AG04450 (cell line): ENCODE measurements at regions of chr19 and their contacts with region 1.

Region 1: DNA sequence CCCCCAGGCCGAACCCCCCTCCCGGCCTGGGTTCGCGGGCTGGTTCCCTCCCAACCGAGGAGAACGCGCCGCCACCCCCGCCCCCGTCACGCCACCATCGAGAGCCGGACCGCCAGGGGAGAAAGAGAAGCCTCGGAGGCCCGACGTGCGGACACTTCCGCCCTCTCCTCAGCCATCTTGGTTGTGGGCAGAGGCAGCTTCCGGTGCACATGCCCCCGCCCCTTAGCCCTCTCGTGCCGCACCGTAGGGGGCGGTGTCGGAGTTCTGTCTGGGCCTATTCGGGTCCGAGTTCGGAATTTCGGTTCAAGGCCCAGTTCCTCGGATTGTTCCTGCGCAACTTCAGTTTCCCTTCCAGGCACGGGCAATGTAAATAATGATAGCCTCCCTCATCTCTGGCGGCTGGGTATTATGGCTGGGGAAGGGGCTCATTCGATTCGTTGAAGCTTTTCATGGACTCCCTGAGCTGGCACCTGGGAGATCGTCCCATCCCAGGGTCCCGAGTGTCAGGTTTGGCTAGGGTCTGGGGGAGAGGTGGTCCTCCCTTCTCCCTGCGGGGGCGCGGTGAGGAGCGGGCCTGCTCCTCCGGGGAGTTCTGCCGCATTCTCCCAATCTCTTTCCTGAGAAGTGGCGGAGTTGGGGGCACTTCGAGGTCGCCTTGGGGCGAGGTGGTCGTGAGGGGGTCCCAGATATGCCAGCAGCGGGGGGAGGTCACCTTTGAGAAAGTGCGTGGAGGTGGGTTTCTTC is at the starts of genes IER2 and STX10:
- DNase-seq: peak; percentile 86
- H3K4me3 ChIP-seq: peak within 1 kb of the TSS; percentile 87
- H3K27ac ChIP-seq: peak within 1 kb of the TSS; percentile 94
- H3K27me3 ChIP-seq: no peaks in the 10 kb centered on the region
- CTCF ChIP-seq: peak; percentile 67
- polyA plus RNA-seq, gene IER2: 15.3 and 21.3 TPM in 2 replicates
- polyA plus RNA-seq, gene STX10: 47.9 and 57.6 TPM in 2 replicates

Region 2: DNA sequence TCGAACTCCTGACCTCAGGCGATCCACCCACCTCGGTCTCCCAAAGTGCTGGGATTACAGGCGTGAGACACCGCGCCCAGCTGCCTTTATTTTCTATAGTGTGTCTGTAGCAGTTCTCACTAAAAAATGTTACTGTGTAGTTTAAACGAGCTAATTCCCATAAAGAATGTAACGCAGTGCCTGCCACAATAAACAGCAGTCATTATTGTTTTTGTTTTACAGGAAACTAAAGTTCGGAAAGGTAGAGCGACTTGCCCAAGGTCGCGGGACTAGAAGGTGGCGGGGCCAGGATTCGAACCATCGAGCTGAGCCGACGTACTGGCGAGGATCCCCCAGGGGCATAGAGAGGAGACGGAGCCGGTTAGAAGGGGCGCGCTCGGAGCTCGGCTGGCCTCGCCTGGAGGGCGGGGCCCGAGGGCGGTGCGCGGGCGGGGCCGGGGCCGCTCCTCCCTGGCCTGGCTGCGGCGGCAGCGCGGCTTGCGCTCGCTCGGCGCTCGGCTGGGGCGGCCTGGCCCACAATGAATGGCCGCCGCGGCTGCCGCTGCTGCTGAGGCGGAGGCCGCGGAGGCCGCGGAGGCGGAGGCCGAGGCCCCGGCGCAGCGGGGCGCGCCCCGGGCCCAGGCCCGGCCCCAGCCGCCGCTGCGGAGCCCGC is 32.5 kb before region 1 on chr19 and contains the start of gene NACC1:
- CTCF ChIA-PET with region 1: interaction called, 3 read pairs
- POLR2A ChIA-PET with region 1: interaction called, 16 read pairs
- DNase-seq: no peak
- H3K4me3 ChIP-seq: peak within 1 kb of the TSS; percentile 98
- H3K27ac ChIP-seq: peak within 1 kb of the TSS; percentile 61
- H3K27me3 ChIP-seq: no peaks in the 10 kb centered on the region
- CTCF ChIP-seq: no peak
- polyA plus RNA-seq, gene NACC1: 43.4 and 76.4 TPM in 2 replicates

Region 3: DNA sequence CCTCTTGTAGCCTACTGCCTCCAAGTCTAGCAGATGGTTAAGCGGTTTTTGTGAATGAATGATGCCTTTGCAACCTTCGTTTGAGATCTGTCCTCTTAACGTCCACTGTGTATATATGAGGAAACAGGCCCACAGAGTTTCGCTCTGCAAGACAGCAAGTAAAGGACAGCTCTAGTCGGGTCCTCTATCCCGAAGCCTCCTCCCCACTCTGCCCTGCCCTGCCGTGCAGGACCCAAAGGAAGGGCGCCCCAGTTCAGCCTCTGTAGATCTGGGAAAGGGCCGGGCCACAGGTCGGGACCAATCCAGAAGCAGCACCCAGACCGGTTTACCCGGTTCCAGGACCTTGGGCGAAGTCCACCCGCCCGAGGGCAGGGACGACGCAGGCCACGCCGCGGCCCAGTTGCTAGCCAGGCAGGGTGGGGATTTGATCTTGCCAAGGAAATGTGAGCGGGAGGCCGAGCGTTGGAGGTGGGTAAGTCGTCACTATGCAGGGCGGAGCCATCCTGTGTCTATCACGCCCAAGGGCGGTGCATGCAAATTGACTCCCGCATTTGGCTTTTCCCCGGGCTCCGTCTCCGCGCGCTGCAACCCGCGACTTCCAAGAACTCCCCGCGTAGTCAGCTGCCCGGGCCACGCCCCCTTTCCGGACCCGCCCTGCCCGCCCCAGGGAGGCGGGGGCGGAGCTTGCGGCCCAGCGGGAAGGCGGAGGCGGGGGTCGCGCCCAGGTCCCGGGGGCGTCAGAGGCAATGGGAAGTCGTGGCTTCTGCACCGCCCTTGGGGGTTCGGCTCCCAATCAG is 12.4 kb after region 1 on chr19:
- CTCF ChIA-PET with region 1: no interaction called
- POLR2A ChIA-PET with region 1: interaction called, 37 read pairs
- DNase-seq: peak; percentile 91
- H3K4me3 ChIP-seq: peak overlapping the region; percentile 49
- H3K27ac ChIP-seq: peak overlapping the region; percentile 97
- H3K27me3 ChIP-seq: no peaks in the 10 kb centered on the region
- CTCF ChIP-seq: no peak

Region 4: GRCh38 chr19:13234518-13234917 is 84.2 kb after region 1 on chr19:
- CTCF ChIA-PET with region 1: no interaction called
- POLR2A ChIA-PET with region 1: no interaction called
- DNase-seq: no peak
- H3K4me3 ChIP-seq: no peak overlapping the region
- H3K27ac ChIP-seq: no peak overlapping the region
- H3K27me3 ChIP-seq: no peaks in the 10 kb centered on the region
- CTCF ChIP-seq: peak; percentile 62

Region 5: GRCh38 chr19:13865571-13866462 is 715.5 kb after region 1 on chr19:
- CTCF ChIA-PET with region 1: no interaction called
- POLR2A ChIA-PET with region 1: no interaction called
- DNase-seq: no peak
- H3K4me3 ChIP-seq: peak overlapping the region; percentile 57
- H3K27ac ChIP-seq: no peak overlapping the region
- H3K27me3 ChIP-seq: no peaks in the 10 kb centered on the region
- CTCF ChIP-seq: no peak